Sigmoid colon (tissue), 7 donors: ENCODE measurements at regions of chr12 and their contacts with region 1.

Region 1: DNA sequence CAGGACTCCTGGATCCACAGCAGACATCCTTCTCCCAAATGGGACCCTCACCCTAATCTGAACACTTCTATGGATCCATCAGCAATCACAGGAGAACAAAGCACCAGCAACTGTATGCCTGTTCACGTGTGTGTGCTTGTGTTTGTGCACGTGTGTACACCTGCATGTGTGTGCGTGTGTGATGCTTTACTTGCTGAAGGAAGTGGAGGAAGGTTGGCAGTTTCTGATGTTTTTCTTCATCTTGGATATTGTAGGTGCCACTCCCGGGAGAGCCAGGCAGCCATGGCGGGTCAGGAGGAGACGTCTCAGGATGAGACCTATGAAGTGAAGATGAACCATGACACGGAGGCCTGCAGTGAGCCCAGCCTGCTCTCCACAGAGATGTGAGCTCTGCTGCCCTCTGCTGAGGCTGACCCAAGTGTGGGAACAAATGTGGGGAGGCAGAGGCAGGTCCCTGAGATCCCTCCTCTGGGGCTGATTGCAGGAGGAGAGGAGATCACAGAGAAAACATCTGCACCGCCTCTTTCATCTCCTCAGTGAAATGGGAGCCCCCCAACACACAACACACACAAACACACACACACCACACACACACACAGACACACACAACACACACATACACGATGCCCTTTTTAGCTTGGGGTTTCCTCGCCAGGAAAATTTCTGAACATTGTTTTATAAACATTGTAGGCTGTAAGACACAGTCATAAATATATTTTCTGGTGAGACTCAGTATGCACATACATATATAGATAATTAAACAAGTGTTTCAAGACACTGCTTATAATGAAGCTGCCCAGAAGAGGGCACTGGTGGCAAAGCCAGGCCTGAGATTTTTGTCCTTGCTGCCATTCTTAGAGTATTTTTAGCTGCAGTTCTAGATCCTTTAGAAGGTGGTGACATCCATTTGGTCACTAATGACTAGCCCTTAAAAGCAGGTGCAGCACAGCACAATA is 112.2 kb upstream of the FKBP4 start:
- DNase-seq: no peak
- H3K4me3 ChIP-seq: no peak overlapping the region
- H3K27ac ChIP-seq: peak overlapping the region in 2 of 4 donors; percentile 34 to 49
- H3K4me1 ChIP-seq: peaks cover 0 to 10% (median 3%) of the 10 kb centered on the region in 4 donors
- H3K27me3 ChIP-seq: no peaks in the 10 kb centered on the region
- CTCF ChIP-seq: peak in 2 of 4 experiments; percentile 7 to 35
- EP300 ChIP-seq: no peak
- POLR2A ChIP-seq: no peak

Region 2: DNA sequence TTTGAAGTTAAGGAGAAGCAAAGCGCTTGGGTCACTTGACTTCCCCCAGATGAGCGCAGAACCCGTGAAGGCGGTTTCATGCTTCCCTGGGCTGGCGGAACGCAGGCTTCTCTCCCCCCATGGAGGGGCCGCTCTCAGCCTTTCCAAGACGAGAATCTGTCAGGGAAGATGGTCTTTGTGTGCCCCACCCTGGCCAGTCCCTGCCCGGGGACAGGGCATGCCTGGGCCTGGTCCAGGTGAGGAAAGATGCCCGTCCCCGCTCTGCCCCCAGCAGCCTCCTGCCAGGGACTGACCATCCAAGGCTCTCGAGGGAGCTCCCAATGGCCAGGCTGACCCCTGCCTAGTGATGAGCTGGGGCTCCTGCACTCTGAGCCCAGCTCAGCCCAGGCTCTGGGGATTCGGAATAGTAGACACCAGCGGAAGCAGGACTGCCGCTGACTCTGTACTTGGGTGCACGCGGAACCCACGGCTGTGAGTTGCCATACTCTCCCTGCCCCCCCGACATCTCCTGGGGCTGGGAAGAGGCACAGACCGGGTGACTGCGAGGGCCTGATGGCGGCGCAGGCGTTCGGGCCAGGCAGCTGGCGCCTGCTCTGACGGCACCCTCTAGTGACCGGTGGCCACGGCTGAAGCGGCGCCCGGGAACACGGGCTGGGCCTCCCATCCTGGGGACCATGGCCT is 30.0 kb before region 1 on chr12:
- intact Hi-C with region 1: no loop called
- DNase-seq: peak; percentile 58
- H3K4me3 ChIP-seq: no peak overlapping the region
- H3K27ac ChIP-seq: no peak overlapping the region
- H3K4me1 ChIP-seq: peaks cover 0 to 27% (median 21%) of the 10 kb centered on the region in 4 donors
- H3K27me3 ChIP-seq: no peaks in the 10 kb centered on the region
- CTCF ChIP-seq: no peak
- EP300 ChIP-seq: no peak
- POLR2A ChIP-seq: no peak

Region 3: DNA sequence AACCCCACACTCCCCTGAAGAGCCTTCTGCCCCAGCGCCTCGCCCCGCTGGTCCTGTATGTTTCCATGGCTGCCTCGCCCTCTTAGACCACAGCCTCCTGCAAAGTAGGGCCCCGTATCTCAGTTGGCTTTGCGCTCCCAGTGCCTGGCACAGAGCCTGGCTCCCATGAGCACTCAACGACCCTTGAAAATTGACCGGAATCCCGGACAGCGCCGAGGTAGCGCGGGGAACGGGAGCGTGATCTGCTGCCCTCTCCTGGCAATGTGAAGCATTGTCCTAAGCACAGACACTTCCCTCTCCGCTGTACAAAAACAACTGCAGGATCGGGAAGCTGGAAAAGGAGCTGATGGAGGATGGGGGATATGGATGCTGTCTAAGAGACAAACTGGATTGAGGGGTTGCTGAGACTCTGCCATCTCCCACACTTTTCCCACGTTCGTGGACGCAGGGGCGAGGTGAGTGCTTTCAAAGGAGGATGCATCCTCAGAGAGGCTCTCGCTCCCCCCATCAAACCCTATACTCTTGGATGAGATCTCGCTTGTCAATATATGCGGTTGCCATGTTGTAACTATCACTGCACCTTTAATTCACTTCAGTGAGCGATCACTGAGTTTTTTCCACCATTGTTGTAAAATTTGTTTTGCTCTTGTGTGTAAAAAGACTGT is 101.5 kb after region 1 on chr12:
- intact Hi-C with region 1: loop called (anchors 5 kb)
- DNase-seq: peak; percentile 79
- H3K4me3 ChIP-seq: peak overlapping the region in 3 of 4 donors; percentile 24 to 34 (median 25)
- H3K27ac ChIP-seq: no peak overlapping the region
- H3K4me1 ChIP-seq: peaks cover 0 to 11% (median 10%) of the 10 kb centered on the region in 4 donors
- H3K27me3 ChIP-seq: peaks cover 0 to 6% (median 0%) of the 10 kb centered on the region in 3 donors
- CTCF ChIP-seq: peak; percentile 59 to 89 (median 81)
- EP300 ChIP-seq: no peak
- POLR2A ChIP-seq: no peak